MCF 10A (cell line): ENCODE measurements at regions of chr3 and their contacts with region 1.

Region 1: GRCh38 chr3:141011232-141011996 is 39.7 kb upstream of the SPSB4 start:
- DNase-seq: peak; percentile 66
- H3K4me3 Mint-ChIP-seq: no peak overlapping the region
- H3K27ac Mint-ChIP-seq: no peak overlapping the region
- H3K4me1 Mint-ChIP-seq: no peaks in the 10 kb centered on the region
- H3K27me3 Mint-ChIP-seq: peaks cover 11% of the 10 kb centered on the region
- CTCF ChIP-seq: peak; percentile 84

Region 2: DNA sequence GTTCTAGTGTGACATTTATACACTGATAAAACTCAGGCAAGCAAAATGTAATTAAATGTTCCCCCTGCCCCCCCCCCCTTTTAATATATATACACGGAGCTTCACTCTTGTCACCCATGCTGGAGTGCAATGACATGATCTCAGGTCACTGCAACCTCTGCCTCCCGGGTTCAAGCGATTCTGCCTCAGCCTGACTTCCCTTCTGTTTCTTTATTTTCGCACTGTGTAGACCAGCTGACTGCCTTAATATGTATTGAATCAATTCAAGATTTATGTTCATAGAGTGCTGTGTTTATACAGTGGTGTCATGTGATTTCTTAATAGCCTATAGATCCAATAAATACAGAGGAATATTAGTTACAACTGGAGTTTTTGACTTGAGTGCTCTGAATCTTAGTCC is 30.8 kb before region 1 on chr3:
- CTCF ChIA-PET with region 1: no interaction called
- POLR2A ChIA-PET with region 1: no interaction called
- intact Hi-C with region 1: no loop called
- DNase-seq: no peak
- H3K4me3 Mint-ChIP-seq: no peak overlapping the region
- H3K27ac Mint-ChIP-seq: no peak overlapping the region
- H3K4me1 Mint-ChIP-seq: no peaks in the 10 kb centered on the region
- H3K27me3 Mint-ChIP-seq: no peaks in the 10 kb centered on the region
- CTCF ChIP-seq: no peak

Region 3: DNA sequence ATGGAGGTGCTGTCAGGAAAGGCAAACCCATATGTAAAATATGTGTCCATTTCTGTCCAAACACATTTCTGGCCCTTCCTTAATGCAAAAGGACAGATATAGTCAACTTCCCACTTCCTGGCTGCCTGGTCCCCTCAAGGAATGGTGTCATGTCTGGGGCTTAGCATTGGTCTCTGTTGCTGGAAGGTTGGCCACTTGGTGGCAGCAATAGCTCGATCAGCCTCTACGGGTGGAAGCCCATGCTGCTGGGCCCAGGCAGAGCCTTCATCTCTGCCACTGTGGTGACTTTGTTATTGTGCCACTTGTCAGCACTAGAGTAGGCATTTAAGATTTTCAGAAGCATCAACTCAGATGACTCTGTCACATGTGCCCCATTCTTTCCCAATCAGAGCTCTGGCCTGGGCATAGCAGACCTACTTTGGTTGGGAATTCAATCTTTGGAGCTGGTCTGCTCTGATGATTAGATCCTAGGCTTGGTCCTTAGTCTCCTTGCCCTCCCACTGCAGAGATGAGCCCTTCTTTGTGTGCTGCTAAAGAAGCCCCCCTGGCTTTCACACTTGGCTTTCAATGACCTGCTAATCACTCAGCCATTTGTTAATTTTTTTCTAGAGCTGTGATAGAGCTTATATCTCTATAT is 11.3 kb before region 1 on chr3:
- CTCF ChIA-PET with region 1: interaction called, 62 read pairs
- POLR2A ChIA-PET with region 1: no interaction called
- intact Hi-C with region 1: no loop called
- DNase-seq: peak; percentile 64
- H3K4me3 Mint-ChIP-seq: no peak overlapping the region
- H3K27ac Mint-ChIP-seq: no peak overlapping the region
- H3K4me1 Mint-ChIP-seq: peaks cover 5% of the 10 kb centered on the region
- H3K27me3 Mint-ChIP-seq: no peaks in the 10 kb centered on the region
- CTCF ChIP-seq: peak; percentile 55

Region 4: DNA sequence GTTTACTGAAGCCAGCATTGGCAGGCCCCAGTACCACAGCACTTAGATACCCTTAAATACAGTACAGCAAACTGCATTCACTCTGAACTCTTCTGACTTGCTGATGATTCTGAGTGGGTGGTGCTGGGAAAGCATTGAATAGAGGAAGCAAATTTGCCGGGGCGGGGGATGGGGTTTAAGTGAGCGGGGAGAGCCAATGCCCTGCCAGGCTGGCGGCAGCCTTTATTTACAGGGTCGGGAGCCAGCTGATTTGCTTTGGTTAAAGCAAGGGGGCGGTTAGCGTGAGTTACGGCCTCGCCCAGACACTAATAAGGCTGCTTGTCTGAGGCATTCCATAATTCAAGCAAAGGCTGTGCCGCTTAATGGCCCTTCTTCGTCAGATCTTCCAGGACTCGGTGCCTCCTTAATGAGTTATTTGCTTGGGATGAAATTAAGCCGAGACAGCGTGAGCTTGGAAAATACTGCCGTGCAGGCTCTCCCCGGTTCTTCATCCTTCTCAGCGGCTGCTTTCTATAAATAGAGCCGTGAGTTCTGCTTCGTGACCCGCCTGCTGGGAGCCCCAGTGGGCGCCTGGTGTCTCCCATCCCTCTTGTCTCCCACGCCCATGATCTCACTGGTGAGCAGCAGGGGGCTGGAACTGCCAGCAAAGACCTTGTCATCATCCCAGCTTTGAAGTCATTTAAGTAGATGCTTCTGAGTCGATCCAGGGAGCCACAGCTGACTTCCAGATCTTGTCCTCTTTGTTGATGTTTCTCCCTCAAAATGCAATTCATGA is 65.6 kb after region 1 on chr3:
- CTCF ChIA-PET with region 1: interaction called, 11 read pairs
- POLR2A ChIA-PET with region 1: no interaction called
- intact Hi-C with region 1: no loop called
- DNase-seq: no peak
- H3K4me3 Mint-ChIP-seq: no peak overlapping the region
- H3K27ac Mint-ChIP-seq: no peak overlapping the region
- H3K4me1 Mint-ChIP-seq: no peaks in the 10 kb centered on the region
- H3K27me3 Mint-ChIP-seq: no peaks in the 10 kb centered on the region
- CTCF ChIP-seq: no peak

Region 5: GRCh38 chr3:141105828-141106628 is 94.6 kb after region 1 on chr3:
- CTCF ChIA-PET with region 1: interaction called, 53 read pairs
- POLR2A ChIA-PET with region 1: no interaction called
- intact Hi-C with region 1: loop called (anchors 1 kb)
- DNase-seq: peak; percentile 81
- H3K4me3 Mint-ChIP-seq: no peak overlapping the region
- H3K27ac Mint-ChIP-seq: no peak overlapping the region
- H3K4me1 Mint-ChIP-seq: no peaks in the 10 kb centered on the region
- H3K27me3 Mint-ChIP-seq: no peaks in the 10 kb centered on the region
- CTCF ChIP-seq: peak; percentile 65

Region 6: GRCh38 chr3:141178026-141178425 is 166.6 kb after region 1 on chr3:
- CTCF ChIA-PET with region 1: interaction called, 14 read pairs
- POLR2A ChIA-PET with region 1: no interaction called
- intact Hi-C with region 1: no loop called
- DNase-seq: no peak
- H3K4me3 Mint-ChIP-seq: no peak overlapping the region
- H3K27ac Mint-ChIP-seq: no peak overlapping the region
- H3K4me1 Mint-ChIP-seq: no peaks in the 10 kb centered on the region
- H3K27me3 Mint-ChIP-seq: peaks cover 22% of the 10 kb centered on the region
- CTCF ChIP-seq: no peak